Esophagus muscularis mucosa (tissue), 4 donors: ENCODE measurements at regions of chr19 and their contacts with region 1.

Region 1: DNA sequence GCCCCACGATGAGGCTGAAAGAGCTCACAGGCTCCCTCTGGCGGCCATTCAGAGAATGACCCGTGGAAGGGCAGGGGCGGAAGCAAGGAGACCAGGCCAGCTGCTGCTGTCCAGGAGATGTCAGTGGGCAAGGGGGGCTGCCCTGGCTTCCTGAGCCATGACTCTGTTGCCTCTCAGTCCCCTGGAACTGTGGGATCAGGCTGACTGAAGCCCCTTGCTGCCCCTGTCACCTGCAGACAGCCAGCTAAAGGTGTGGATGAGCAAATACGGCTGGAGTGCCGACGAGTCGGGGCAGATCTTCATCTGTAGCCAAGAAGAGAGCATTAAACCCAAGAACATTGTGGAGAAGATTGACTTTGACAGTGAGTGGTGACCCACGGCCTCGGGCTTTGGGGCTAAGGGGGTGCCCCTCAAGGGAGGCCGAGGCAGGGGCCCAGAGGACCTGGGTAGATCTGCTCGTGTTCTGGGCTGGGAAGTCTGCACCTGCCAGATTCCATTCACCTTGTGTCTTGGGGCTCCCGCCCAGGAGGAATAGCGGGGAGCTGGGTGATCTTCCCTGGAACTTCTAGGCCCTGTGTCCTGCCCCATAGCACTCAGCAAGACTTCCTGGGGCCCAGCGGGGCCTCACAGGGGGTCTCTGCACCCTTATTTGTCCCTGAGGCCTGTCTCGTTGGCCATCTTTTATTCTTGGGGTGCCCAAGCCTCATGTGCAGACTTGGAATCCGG is 12.5 kb upstream of the ACTN4 start:
- DNase-seq: no peak
- H3K4me3 ChIP-seq: no peak overlapping the region
- H3K27ac ChIP-seq: peak overlapping the region; percentile 39 to 67 (median 54)
- H3K4me1 ChIP-seq: peaks cover 18 to 32% (median 25%) of the 10 kb centered on the region in 4 donors
- H3K27me3 ChIP-seq: no peaks in the 10 kb centered on the region
- CTCF ChIP-seq: peak in 2 of 3 experiments; percentile 94
- EP300 ChIP-seq: no peak
- POLR2A ChIP-seq: no peak

Region 2: DNA sequence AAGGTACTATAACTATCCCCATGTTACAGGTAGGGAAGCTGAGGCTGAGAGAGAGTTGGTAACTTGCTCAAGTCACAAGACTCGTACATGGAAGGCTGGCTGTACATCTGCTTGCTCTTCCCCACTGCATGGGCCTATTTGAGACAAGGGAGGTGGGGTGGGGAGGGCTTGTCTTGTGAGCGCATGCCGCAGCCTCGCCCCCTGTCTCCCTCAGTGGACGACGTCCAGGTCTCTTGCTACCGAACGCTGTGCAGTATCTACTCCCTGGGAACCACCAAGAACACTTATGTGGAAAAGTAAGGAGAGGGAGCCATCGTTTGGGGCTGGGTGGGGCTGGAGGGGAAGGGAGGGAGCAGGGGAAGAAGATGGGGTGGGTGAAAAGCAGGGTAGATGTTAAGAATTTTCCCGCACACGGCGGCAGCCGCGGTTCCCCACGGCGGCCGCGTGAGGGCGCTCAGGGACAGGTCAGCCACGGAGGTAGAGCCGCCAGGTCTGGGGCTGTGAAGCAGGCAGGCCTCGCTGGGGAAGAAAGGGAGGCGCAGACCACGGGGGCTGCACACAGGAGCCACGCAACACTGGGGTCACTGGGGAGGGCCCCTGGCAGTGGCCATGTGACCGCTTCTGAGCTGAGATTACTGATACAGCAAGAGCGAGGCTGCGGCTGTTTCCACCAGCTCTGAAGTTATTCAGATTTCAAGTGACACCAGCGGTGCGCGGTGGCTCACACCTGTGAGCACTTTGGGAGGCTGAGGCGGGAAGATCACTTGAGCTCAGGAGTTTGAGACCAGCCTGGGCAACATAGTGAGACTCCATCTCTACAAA is 119.9 kb before region 1 on chr19:
- intact Hi-C with region 1: loop called (anchors 10 kb)
- DNase-seq: peak; percentile 94
- H3K4me3 ChIP-seq: peak overlapping the region in 2 of 4 donors; percentile 12 to 18
- H3K27ac ChIP-seq: no peak overlapping the region
- H3K4me1 ChIP-seq: peaks cover 0 to 10% (median 8%) of the 10 kb centered on the region in 4 donors
- H3K27me3 ChIP-seq: peaks cover 0 to 12% (median 0%) of the 10 kb centered on the region in 4 donors
- CTCF ChIP-seq: peak; percentile 67 to 92 (median 78)
- EP300 ChIP-seq: no peak
- POLR2A ChIP-seq: no peak

Region 3: DNA sequence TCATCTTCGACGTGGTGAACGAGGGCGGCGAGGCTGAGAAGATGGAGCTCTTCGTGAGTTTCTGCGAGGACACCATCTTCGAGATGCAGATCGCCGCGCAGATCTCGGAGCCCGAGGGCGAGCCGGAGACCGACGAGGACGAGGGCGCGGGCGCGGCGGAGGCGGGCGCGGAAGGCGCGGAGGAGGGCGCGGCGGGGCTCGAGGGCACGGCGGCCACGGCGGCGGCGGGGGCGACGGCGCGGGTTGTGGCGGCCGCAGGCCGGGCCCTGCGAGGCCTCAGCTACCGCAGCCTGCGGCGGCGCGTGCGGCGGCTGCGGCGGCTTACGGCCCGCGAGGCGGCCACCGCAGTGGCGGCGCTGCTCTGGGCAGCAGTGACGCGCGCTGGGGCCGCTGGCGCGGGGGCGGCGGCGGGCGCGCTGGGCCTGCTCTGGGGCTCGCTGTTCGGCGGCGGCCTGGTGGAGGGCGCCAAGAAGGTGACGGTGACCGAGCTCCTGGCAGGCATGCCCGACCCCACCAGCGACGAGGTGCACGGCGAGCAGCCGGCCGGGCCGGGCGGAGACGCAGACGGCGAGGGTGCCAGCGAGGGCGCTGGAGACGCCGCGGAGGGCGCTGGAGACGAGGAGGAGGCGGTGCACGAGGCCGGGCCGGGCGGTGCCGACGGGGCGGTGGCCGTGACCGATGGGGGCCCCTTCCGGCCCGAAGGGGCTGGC is 69.8 kb before region 1 on chr19:
- intact Hi-C with region 1: no loop called
- DNase-seq: no peak
- H3K4me3 ChIP-seq: peak overlapping the region; percentile 17 to 50 (median 33)
- H3K27ac ChIP-seq: no peak overlapping the region
- H3K4me1 ChIP-seq: peaks cover 0 to 7% (median 5%) of the 10 kb centered on the region in 4 donors
- H3K27me3 ChIP-seq: peaks cover 0 to 54% (median 5%) of the 10 kb centered on the region in 4 donors
- CTCF ChIP-seq: no peak
- EP300 ChIP-seq: no peak
- POLR2A ChIP-seq: no peak

Region 4: GRCh38 chr19:38701455-38702063 is 66.6 kb after region 1 on chr19:
- intact Hi-C with region 1: no loop called
- DNase-seq: no peak
- H3K4me3 ChIP-seq: no peak overlapping the region
- H3K27ac ChIP-seq: peak overlapping the region; percentile 92 to 98 (median 96)
- H3K4me1 ChIP-seq: peaks cover 87 to 100% (median 99%) of the 10 kb centered on the region in 4 donors
- H3K27me3 ChIP-seq: no peaks in the 10 kb centered on the region
- CTCF ChIP-seq: no peak
- EP300 ChIP-seq: peak; percentile 2
- POLR2A ChIP-seq: no peak

Region 5: GRCh38 chr19:38831142-38831605 is 196.3 kb after region 1 on chr19:
- intact Hi-C with region 1: loop called (anchors 10 kb)
- DNase-seq: no peak
- H3K4me3 ChIP-seq: peak overlapping the region; percentile 69 to 76 (median 70)
- H3K27ac ChIP-seq: peak overlapping the region; percentile 89 to 93 (median 92)
- H3K4me1 ChIP-seq: peaks cover 42 to 67% (median 46%) of the 10 kb centered on the region in 4 donors
- H3K27me3 ChIP-seq: no peaks in the 10 kb centered on the region
- CTCF ChIP-seq: no peak
- EP300 ChIP-seq: no peak
- POLR2A ChIP-seq: no peak